Left cardiac atrium (tissue), 4 donors: ENCODE measurements at regions of chr6 and their contacts with region 1.

Region 1: DNA sequence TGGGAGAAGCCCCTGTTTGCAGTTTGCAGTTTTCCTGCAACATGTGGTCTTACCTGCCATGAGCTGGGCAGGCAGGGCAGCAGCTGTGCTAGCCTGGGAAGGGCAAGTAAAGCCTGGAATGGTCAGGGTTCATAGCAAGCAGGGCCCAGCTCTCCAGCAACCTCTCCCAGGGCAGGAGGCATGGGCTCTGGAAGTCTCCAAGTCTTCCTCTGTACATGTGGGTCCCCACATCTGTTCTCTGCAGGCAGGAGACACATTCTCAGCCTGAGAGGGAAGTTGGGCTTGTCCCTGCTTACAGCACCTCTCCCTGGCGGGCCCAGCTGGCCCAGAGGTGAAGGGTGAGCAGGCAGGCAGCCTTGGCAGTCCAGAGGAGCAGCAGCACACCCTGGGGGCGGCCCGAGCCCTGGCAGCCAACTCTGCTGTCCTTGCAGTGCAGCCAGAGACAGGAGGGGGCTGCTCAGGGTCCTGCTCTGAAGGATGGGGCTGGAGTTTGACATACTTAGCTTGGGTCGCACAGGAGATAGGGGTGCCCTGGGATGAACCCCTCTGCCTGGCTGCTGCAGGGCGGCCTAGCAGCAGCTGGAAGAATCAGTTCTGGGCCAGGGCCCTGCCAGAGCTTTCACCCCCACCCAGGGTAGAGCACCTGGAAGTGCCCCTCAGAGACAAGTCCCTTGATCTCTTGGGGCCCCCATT is 176.0 kb downstream of the MRPL14 start:
- DNase-seq: peak; percentile 58
- ATAC-seq: peak; percentile 72 to 76

Region 2: GRCh38 chr6:43143235-43144124 is 807.7 kb before region 1 on chr6:
- intact Hi-C with region 1: no loop called
- DNase-seq: peak; percentile 91
- ATAC-seq: peak; percentile 97

Region 3: GRCh38 chr6:43856005-43856765 is 95.0 kb before region 1 on chr6:
- intact Hi-C with region 1: loop called in 1 of 2 experiments (anchors 5 kb)
- DNase-seq: peak; percentile 36
- ATAC-seq: peak; percentile 40 to 48

Region 4: DNA sequence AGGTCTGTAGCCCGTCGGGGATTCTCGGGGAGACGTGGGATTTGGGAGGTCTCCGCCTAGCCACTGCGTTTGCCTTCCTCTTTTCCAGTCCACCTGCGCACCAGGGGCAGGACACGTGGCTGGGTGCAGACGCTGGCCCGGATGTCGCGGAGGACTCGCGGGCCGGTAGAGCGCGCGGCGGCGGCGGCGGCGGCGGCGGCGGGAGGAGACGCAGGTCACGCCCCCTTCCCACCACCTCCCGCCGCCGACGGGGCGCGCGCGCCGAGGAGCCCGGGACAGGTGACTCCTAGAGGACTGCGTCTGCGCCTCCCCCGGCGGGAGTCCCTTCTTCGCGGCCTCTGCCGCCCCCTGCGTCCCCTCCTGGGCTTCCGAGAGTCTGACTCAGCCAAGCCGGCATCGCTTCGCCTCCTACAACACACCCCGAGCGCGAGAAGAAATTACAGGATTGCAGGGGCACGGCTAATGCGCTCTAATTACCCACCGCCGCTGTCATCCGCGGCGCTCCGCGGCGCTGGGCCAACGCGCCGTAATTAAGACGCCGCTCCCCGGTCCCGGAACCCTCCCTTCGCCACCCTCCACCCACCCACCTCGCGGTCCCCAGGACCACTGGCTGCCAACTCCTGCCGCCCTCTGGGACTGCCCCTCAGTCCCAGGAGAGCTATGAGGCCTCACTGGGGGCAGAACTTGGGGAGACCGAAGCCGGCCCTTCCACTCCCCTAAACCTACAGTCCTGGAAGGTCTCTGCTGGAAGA is 51.6 kb after region 1 on chr6:
- intact Hi-C with region 1: loop called in 1 of 2 experiments (anchors 5 kb)
- DNase-seq: peak; percentile 57
- ATAC-seq: peak; percentile 54 to 69

Region 5: DNA sequence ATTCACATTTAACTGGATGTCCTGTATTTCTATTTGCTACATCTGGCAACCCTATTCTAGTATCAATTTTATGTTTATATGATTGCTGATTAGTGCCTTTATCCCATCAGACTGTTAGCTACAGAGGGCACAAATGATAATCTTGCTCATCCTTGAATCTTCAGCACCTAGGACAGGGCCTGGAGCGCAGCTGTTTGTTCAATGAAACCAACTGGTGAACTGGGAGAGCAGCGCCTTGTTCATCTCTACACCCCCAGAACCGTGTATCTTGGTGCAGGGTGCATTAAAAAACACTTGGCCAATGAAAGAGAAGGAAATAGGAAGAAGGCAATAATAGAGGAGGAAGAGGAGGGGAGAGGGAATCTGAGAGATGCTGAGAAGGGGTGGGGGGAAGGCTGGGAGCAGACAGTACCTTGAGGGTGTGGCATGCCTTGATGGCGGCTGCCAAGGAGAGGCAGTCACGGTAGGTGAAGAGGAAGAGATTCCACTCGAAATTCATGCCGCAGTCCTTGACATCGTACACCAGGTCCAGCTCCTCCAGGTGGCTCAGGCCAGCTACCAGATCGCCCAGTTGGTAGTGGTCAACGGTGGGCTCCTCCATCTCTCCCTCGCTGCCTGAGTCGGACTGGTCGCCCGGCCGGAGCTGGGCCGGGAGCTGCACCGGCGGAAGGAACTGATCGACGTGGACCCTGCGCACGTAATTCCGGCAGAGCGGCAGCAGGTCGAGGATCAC is 334.5 kb after region 1 on chr6:
- intact Hi-C with region 1: no loop called
- DNase-seq: no peak
- ATAC-seq: no peak

Region 6: DNA sequence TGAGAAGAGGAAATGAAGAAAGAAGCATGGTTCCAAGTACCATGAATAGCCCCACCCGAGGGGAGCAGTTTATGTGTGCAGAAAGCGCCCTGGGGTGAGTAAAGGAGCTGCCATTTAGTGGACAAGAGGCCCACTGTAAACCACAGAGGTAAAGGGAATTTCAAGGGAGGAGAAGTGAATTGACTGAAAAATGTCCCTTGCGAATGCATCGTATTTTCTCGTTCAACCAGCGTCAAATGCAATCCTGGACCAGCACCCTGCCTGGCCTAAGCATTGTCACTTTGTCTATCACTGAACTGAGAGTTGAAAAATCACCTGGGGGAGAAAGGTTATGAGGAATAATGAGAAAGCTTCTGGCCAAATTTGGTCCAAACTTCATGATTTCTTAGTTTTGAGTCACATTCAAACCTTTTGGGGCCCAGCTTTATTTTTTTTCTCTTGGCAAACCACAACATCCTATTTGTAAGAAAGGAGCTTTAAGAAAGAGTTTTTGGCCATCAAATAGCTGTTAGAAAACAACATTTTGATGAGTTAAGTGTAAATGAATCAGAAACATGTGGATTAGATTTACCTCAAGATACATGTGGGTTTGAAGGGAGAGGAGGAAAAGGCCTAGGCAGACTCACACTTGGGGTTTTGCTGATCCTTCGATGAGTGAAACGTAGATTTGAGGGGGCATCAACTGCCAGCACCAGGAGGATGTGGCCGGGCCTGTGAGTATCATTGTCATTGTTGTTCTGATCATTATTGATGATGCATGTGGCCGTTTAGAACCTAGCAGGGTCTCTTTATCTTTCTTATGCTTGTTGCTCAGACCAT is 1850.5 kb after region 1 on chr6:
- intact Hi-C with region 1: no loop called
- DNase-seq: no peak
- ATAC-seq: no peak